AG04450 (cell line): ENCODE measurements at regions of chr5 and their contacts with region 1.

Region 1: GRCh38 chr5:141564216-141564692 is 54.5 kb downstream of the DIAPH1 start:
- DNase-seq: peak; percentile 90
- H3K4me3 ChIP-seq: no peak overlapping the region
- H3K27ac ChIP-seq: peak overlapping the region; percentile 23
- H3K27me3 ChIP-seq: no peaks in the 10 kb centered on the region
- CTCF ChIP-seq: peak; percentile 78

Region 2: GRCh38 chr5:141100240-141100805 is 463.9 kb before region 1 on chr5 and contains the start of gene PCDHB3:
- CTCF ChIA-PET with region 1: no interaction called
- POLR2A ChIA-PET with region 1: no interaction called
- DNase-seq: no peak
- H3K4me3 ChIP-seq: no peak within 1 kb of the TSS
- H3K27ac ChIP-seq: no peak within 1 kb of the TSS
- H3K27me3 ChIP-seq: no peaks in the 10 kb centered on the region
- CTCF ChIP-seq: no peak
- polyA plus RNA-seq, gene PCDHB3: 0.12 and 0.15 TPM in 2 replicates

Region 3: GRCh38 chr5:141234109-141234667 is 330.1 kb before region 1 on chr5:
- CTCF ChIA-PET with region 1: interaction called, 17 read pairs
- POLR2A ChIA-PET with region 1: no interaction called
- DNase-seq: no peak
- H3K4me3 ChIP-seq: peak overlapping the region; percentile 21
- H3K27ac ChIP-seq: no peak overlapping the region
- H3K27me3 ChIP-seq: no peaks in the 10 kb centered on the region
- CTCF ChIP-seq: no peak

Region 4: DNA sequence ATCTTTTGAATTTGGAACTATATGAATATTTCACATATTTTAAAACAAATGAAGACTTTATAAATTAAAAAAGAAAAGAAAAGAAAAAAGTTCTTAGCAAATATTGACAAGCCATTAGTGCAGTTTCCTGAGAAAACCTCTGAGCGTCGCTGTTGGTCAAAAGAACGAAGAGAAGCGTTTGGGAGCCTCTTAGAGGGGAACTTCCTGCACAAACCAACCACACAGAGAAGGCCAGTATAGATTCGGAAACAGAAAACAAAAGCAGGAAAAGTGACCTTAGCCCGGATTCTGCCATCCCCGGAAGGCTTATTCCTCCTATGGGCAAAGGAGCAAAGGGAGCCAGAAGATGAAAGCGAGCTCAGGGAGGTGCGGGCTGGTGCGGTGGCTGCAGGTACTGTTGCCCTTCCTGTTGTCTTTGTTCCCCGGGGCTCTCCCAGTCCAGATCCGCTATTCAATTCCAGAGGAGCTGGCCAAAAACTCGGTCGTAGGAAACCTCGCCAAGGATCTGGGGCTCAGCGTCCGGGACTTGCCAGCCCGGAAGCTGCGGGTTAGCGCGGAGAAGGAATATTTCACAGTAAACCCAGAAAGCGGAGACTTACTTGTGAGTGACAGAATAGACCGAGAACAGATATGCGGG is 204.3 kb before region 1 on chr5 and contains the start of gene PCDHGB2:
- CTCF ChIA-PET with region 1: interaction called, 35 read pairs
- POLR2A ChIA-PET with region 1: interaction called, 3 read pairs
- DNase-seq: no peak
- H3K4me3 ChIP-seq: peak within 1 kb of the TSS; percentile 50
- H3K27ac ChIP-seq: peak within 1 kb of the TSS; percentile 49
- H3K27me3 ChIP-seq: peaks cover 17% of the 10 kb centered on the region
- CTCF ChIP-seq: peak; percentile 49
- polyA plus RNA-seq, gene PCDHGB2: 4.6 and 4.8 TPM in 2 replicates

Region 5: DNA sequence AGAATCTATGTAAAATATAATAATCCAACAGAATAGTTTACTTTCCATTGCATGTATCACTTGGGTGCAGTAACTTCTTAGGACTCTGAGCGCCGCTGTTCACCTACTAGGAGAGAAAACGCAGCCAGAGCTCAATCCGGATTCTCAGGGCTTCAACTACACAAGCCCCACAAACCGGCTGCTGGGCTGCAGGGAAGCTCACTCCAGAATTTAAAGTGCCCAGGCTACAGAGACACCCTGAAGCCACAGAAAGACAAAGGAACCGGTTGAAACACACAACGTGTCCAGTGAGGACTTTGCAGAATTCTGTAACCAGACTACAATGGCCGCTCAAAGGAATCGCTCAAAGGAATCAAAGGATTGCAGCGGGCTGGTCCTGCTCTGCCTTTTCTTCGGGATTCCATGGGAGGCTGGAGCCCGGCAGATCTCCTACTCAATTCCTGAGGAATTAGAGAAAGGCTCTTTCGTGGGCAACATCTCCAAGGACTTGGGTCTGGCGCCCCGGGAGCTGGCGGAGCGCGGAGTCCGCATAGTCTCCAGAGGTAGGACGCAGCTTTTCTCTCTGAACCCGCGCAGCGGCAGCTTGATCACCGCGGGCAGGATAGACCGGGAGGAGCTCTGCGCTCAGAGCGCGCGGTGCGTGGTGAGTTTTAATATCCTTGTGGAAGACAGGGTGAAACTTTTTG is 151.3 kb before region 1 on chr5 and contains the start of gene PCDHGA10:
- CTCF ChIA-PET with region 1: interaction called, 178 read pairs
- POLR2A ChIA-PET with region 1: interaction called, 5 read pairs
- DNase-seq: no peak
- H3K4me3 ChIP-seq: peak within 1 kb of the TSS; percentile 58
- H3K27ac ChIP-seq: peak within 1 kb of the TSS; percentile 52
- H3K27me3 ChIP-seq: no peaks in the 10 kb centered on the region
- CTCF ChIP-seq: peak; percentile 77
- polyA plus RNA-seq, gene PCDHGA10: 9.2 and 11.7 TPM in 2 replicates

Region 6: DNA sequence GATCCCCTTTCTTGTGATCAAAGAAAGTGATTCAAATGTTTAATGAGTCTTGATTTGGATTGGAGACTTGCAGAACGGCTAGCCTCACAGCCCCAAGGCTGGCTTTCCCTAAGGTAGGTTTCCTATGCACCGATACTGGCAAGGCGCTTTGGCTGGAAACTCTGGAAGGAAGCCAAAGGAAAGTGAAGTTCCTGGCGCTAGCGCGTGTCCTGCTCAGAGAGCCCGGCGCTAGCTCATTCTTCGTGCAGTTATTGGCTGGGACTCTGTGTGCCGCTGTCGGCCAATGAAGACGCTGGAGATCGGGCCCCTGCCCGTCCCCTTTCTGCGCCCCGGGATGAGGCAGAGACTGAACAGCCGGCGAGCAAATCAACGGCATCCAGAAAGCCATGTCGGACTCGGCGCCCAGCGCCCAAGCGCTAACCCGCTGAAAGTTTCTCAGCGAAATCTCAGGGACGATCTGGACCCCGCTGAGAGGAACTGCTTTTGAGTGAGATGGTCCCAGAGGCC is 88.6 kb before region 1 on chr5 and contains the start of gene PCDHGC3:
- CTCF ChIA-PET with region 1: interaction called, 68 read pairs
- POLR2A ChIA-PET with region 1: interaction called, 3 read pairs
- DNase-seq: peak; percentile 90
- H3K4me3 ChIP-seq: peak within 1 kb of the TSS; percentile 82
- H3K27ac ChIP-seq: peak within 1 kb of the TSS; percentile 81
- H3K27me3 ChIP-seq: no peaks in the 10 kb centered on the region
- CTCF ChIP-seq: peak; percentile 20
- polyA plus RNA-seq, gene PCDHGC3: 47.4 and 61.1 TPM in 2 replicates

Region 7: DNA sequence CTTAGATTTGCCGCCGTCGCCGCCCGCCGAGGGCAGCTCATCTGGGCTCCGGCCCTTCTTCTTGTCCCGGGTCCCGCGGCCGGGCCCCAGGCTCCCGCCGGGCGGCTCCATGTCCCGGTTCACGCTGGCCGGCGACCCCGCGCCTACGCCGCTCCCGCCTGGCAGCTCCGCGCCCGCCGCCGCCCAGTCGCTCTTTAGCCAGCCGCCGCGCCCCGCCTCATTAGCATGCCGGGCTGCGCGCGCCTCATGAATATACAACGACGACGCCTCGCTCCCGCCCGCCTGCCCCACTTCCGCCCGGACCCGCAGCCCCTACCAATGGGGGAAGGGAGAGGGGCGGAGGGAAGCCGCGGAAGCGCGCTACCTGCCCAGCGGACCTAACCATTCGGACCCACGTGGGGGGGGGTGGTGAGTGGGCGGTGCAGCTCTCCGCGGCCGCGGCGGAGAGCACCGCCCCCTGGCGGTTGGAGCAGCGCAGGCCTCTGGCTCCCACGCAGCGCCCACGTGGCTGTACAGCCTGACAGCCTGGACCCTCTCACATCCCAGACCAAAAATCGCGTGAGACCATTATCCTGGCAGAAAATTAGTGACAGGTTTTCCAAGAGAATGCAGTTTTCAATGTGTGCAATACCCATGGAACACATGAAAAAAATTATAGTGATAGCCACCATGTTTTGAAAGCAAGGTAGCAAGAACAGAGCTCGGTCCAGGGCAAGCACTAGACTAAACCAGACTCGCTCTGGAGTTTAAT is 54.7 kb after region 1 on chr5 and contains the start of gene DIAPH1:
- CTCF ChIA-PET with region 1: interaction called, 15 read pairs
- POLR2A ChIA-PET with region 1: no interaction called
- DNase-seq: peak; percentile 88
- H3K4me3 ChIP-seq: peak within 1 kb of the TSS; percentile 74
- H3K27ac ChIP-seq: peak within 1 kb of the TSS; percentile 47
- H3K27me3 ChIP-seq: no peaks in the 10 kb centered on the region
- CTCF ChIP-seq: peak; percentile 99
- polyA plus RNA-seq, gene DIAPH1: 27.1 and 34.7 TPM in 2 replicates